A549 (cell line): ENCODE measurements at regions of chr6 and their contacts with region 1.

Region 1: DNA sequence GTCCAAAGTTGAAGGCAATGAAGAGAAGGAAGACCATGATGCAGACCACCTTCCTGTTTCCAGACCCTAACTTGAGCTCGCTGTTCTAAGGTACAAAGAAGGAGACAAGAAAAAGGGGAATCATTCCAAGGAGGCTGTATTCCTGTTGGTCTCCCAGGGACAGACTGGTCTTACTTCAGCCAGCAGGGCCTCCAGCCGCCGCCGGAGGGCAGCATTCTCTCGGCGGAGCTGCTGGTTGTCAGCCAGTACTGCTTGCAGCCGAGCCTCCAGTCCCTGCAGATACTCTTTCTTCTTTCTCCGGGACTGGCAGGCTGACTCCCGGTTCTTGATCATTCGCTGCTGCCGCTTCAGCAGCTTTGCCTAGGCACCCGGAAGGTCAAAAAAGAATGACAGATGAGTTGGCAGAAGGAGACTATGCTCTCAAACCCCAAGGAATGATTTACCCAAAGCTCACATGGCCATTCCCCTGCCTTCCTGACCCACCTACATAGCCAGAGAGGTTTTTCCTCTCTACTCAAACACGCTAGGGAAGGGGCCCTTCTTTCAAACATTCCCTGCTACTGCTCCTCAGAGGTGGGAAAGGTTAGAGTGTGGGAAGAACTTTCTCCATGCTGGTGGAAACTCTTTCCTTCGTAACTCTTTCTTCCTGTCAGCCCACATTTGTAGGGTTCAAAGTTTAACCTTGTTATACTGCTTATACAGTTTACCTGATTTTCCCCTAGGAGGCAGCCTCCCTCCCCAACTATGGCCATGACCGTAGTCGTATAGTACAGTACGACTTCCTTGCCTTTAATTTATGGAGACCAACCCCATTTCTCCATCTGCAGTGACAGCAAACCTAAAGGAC is 9.0 kb downstream of the ATF6B start:
- DNase-seq: peak; percentile 69 to 83
- ATAC-seq: peak; percentile 89 to 95
- H3K4me3 ChIP-seq: no peak overlapping the region
- H3K27ac ChIP-seq: no peak overlapping the region
- H3K4me1 ChIP-seq: peaks cover 14% of the 10 kb centered on the region; the same call in 1 of the 3 replicates
- CTCF ChIP-seq: peak; percentile 73
- EP300 ChIP-seq: no peak
- POLR2A ChIP-seq: no peak
- RAD21 ChIP-seq: peak; percentile 76 to 78

Region 2: GRCh38 chr6:32047850-32048766 is 70.9 kb before region 1 on chr6:
- CTCF ChIA-PET with region 1: interaction called, 12 read pairs
- POLR2A ChIA-PET with region 1: no interaction called
- DNase-seq: peak; percentile 34 to 48
- ATAC-seq: peak; percentile 79 to 94
- H3K4me3 ChIP-seq: no peak overlapping the region
- H3K27ac ChIP-seq: peak overlapping the region in 1 of 2 experiments; percentile 67; a peak in 3 of 6 replicates
- H3K4me1 ChIP-seq: peaks cover 20% of the 10 kb centered on the region
- CTCF ChIP-seq: peak; percentile 54
- EP300 ChIP-seq: no peak
- POLR2A ChIP-seq: no peak
- RAD21 ChIP-seq: peak; percentile 23 to 47; a peak in 2 of 5 replicates

Region 3: GRCh38 chr6:32087574-32088486 is 31.2 kb before region 1 on chr6:
- CTCF ChIA-PET with region 1: interaction called, 41 read pairs
- POLR2A ChIA-PET with region 1: no interaction called
- DNase-seq: peak; percentile 63 to 88
- ATAC-seq: peak; percentile 93 to 98
- H3K4me3 ChIP-seq: peak overlapping the region; percentile 33; the same call in 1 of the 3 replicates
- H3K27ac ChIP-seq: peak overlapping the region; percentile 68 to 91
- H3K4me1 ChIP-seq: peaks cover 9% of the 10 kb centered on the region; the same call in 2 of the 3 replicates
- CTCF ChIP-seq: peak; percentile 45; the same call in 2 of the 3 replicates
- EP300 ChIP-seq: no peak
- POLR2A ChIP-seq: no peak
- RAD21 ChIP-seq: peak; percentile 60 to 78

Region 4: GRCh38 chr6:32108094-32108627 is 10.8 kb before region 1 on chr6:
- CTCF ChIA-PET with region 1: interaction called, 39 read pairs
- POLR2A ChIA-PET with region 1: no interaction called
- DNase-seq: no peak
- ATAC-seq: peak; percentile 52 to 71; a peak in 4 of 6 replicates
- H3K4me3 ChIP-seq: no peak overlapping the region
- H3K27ac ChIP-seq: peak overlapping the region in 1 of 2 experiments; percentile 55; a peak in 3 of 6 replicates
- H3K4me1 ChIP-seq: peaks cover 15% of the 10 kb centered on the region
- CTCF ChIP-seq: no peak
- EP300 ChIP-seq: no peak
- POLR2A ChIP-seq: no peak
- RAD21 ChIP-seq: no peak

Region 5: GRCh38 chr6:32153564-32154513 is 34.8 kb after region 1 on chr6 and contains the start of gene PPT2:
- CTCF ChIA-PET with region 1: interaction called, 18 read pairs
- POLR2A ChIA-PET with region 1: interaction called, 3 read pairs
- DNase-seq: peak; percentile 45 to 85
- ATAC-seq: peak; percentile 70 to 83
- H3K4me3 ChIP-seq: peak within 1 kb of the TSS; percentile 59
- H3K27ac ChIP-seq: peak within 1 kb of the TSS; percentile 81 to 85
- H3K4me1 ChIP-seq: peaks cover 14% of the 10 kb centered on the region; the same call in 2 of the 3 replicates
- CTCF ChIP-seq: no peak
- EP300 ChIP-seq: no peak
- POLR2A ChIP-seq: peak; percentile 13; the same call in 1 of the 2 replicates
- RAD21 ChIP-seq: no peak
- polyA plus RNA-seq, gene PPT2: 11.7 and 18.2 TPM in 2 replicates